Sigmoid colon (tissue), 7 donors: ENCODE measurements at regions of chr16 and their contacts with region 1.

Region 1: DNA sequence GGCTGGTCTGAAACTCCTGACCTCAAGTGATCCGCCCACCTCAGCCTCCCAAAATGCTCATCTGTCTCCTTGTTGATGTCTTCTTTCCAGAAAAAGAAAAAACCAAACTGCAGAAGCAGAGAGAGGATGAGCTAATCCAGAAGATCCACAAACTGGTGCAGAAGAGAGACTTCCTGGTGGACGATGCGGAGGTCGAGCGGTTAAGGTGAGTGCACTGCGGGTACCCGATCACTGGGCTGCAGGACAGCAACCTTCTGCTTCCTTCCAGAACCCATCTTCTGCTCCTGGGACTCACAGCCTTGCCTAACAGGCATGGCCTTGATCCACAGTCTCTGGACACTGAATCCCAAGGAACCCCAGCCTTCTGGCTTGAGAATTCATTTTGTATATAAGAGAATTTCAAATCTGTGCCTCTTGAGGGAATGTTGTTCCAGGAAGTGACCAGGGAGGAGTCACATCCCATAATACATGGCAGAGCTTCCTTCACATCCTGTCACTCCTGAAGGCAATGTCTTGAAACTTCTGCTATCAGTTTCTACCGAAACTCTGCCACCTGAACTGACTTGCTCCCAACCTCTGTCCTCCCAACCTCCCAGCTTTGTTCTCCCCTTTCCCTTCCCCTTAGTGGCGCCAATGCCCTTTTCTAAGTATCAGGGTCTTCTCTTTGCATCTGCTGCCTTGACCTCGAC is 61.7 kb downstream of the MARF1 start:
- DNase-seq: no peak
- H3K4me3 ChIP-seq: no peak overlapping the region
- H3K27ac ChIP-seq: no peak overlapping the region
- H3K4me1 ChIP-seq: no peaks in the 10 kb centered on the region
- H3K27me3 ChIP-seq: no peaks in the 10 kb centered on the region
- CTCF ChIP-seq: no peak
- EP300 ChIP-seq: no peak
- POLR2A ChIP-seq: no peak

Region 2: DNA sequence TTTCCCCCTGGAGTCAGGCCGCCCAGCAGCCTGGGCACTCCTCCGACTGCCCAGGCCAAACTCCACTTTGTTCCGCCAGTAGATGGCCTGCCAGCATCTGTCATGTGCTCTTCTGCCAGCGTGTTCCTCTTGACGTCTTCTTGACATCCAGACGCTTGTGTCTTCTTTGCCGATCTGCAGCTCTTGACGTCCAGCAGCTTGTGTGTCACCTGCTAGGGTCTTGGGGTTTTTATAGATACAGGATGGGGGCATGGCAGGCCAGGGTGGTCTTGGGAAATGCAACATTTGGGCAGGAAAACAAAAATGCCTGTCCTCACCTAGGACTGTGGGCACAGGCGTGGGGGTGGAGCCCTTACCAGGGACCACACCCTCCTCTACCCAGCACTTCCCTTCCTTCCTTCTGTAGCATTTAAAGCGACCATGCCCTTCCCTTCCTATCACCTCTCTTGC is 58.2 kb before region 1 on chr16:
- intact Hi-C with region 1: loop called (anchors 10 kb)
- DNase-seq: no peak
- H3K4me3 ChIP-seq: no peak overlapping the region
- H3K27ac ChIP-seq: peak overlapping the region in 1 of 4 donors; percentile 67
- H3K4me1 ChIP-seq: peaks cover 0 to 39% (median 37%) of the 10 kb centered on the region in 4 donors
- H3K27me3 ChIP-seq: no peaks in the 10 kb centered on the region
- CTCF ChIP-seq: no peak
- EP300 ChIP-seq: no peak
- POLR2A ChIP-seq: no peak